ENCODE measurements at regions of chr10 and their contacts with region 1.

Region 1: DNA sequence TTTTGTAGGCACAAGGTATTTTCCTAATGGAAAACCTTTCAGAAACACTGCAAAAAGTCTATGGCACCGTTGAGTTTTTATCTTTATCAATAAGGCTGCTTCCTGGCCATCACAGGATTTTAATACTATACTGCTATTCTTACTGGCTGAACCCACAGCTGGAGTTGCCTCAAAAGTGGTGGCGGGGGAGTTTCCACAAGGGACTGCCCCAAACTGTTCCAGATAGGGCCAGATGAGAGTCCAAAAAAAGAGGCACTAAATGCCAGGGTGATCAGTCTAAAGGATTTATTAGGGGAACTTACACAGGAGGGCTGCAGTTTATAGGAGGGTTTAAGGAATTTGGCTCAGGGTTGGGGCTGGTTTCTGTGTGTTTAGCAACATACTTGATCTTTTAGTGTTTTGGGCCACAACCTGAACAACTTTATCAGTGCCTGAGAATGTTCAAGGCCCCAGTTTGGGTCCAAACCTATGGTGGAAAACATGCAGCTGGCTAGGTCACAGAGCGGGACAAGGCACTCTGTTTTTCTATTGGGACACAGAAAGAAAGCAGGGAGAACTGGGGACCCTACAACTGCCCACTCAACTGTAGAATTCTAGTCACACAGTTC is 41.4 kb downstream of the STAM start:
- DNase-seq: peak; percentile 75
- H3K4me3 Mint-ChIP-seq: no peak overlapping the region
- H3K27ac Mint-ChIP-seq: peak overlapping the region; percentile 57
- H3K4me1 Mint-ChIP-seq: peaks cover 37% of the 10 kb centered on the region
- H3K27me3 Mint-ChIP-seq: no peaks in the 10 kb centered on the region

Region 2: GRCh38 chr10:17617031-17617911 is 68.1 kb before region 1 on chr10 and contains the start of gene HACD1:
- CTCF ChIA-PET with region 1: interaction called, 4 read pairs
- POLR2A ChIA-PET with region 1: no interaction called
- intact Hi-C with region 1: loop called (anchors 2 kb)
- DNase-seq: peak; percentile 71
- H3K4me3 Mint-ChIP-seq: peak within 1 kb of the TSS; percentile 83
- H3K27ac Mint-ChIP-seq: peak within 1 kb of the TSS; percentile 45
- H3K4me1 Mint-ChIP-seq: peaks cover 4% of the 10 kb centered on the region
- H3K27me3 Mint-ChIP-seq: peaks cover 17% of the 10 kb centered on the region
- total RNA-seq, gene HACD1: 3.3 to 4.1 TPM

Measured in activated CD4-positive, alpha-beta memory T cell treated with anti-CD3 and anti-CD28 coated beads for 36 hours (primary cell).